ENCODE measurements at regions of chr14 and their contacts with region 1.

Region 1: GRCh38 chr14:23306410-23307145 is at the start of gene BCL2L2:
- DNase-seq: peak; percentile 74

Region 2: GRCh38 chr14:23286020-23286905 is 20.3 kb before region 1 on chr14 and contains the start of gene HOMEZ:
- CTCF ChIA-PET with region 1: interaction called, 4 read pairs
- POLR2A ChIA-PET with region 1: interaction called, 46 read pairs
- DNase-seq: peak; percentile 92